ENCODE measurements at regions of chr3 and their contacts with region 1.

Region 1: GRCh38 chr3:10758304-10759061 is 57.5 kb upstream of the SLC6A11 start:
- DNase-seq: peak; percentile 62
- H3K4me3 ChIP-seq: no peak overlapping the region
- H3K27ac ChIP-seq: peak overlapping the region; percentile 87
- H3K4me1 ChIP-seq: peaks cover 23% of the 10 kb centered on the region
- H3K27me3 ChIP-seq: no peaks in the 10 kb centered on the region
- CTCF ChIP-seq: peak; percentile 75 to 77

Region 2: GRCh38 chr3:10738688-10739372 is 19.7 kb before region 1 on chr3:
- CTCF ChIA-PET with region 1: no interaction called
- dilution Hi-C with region 1: no loop called
- in situ Hi-C with region 1: no loop called
- intact Hi-C with region 1: no loop called
- DNase-seq: peak; percentile 51
- H3K4me3 ChIP-seq: no peak overlapping the region
- H3K27ac ChIP-seq: no peak overlapping the region
- H3K4me1 ChIP-seq: no peaks in the 10 kb centered on the region
- H3K27me3 ChIP-seq: peaks cover 6% of the 10 kb centered on the region
- CTCF ChIP-seq: peak; percentile 91 to 94

Region 3: DNA sequence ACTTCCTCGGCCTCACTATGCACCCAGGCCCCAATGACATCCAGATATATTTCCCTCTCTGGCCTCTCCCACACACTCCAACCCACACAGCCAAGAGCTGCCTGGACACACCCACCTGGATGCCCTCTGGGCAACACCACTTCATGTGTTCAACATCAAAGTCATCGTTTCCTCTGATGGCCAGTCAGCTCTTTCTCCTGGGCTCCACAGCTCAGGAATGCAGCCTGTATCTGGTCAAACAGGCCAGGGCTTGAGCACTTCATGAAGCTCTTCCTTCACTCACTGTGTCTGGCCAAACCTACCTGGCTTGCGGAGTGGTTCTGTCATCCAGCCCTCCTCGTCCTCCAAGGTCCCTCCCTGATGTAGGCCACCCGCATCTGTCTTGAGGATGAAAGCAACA is 21.7 kb after region 1 on chr3:
- CTCF ChIA-PET with region 1: no interaction called
- dilution Hi-C with region 1: no loop called
- in situ Hi-C with region 1: no loop called
- intact Hi-C with region 1: loop called (anchors 2 kb)
- DNase-seq: peak; percentile 82
- H3K4me3 ChIP-seq: no peak overlapping the region
- H3K27ac ChIP-seq: no peak overlapping the region
- H3K4me1 ChIP-seq: peaks cover 24% of the 10 kb centered on the region
- H3K27me3 ChIP-seq: no peaks in the 10 kb centered on the region
- CTCF ChIP-seq: no peak

Region 4: GRCh38 chr3:10945683-10946287 is 187.3 kb after region 1 on chr3:
- CTCF ChIA-PET with region 1: interaction called, 6 read pairs
- dilution Hi-C with region 1: no loop called
- in situ Hi-C with region 1: no loop called
- intact Hi-C with region 1: loop called (anchors 2 kb)
- DNase-seq: peak; percentile 33
- H3K4me3 ChIP-seq: no peak overlapping the region
- H3K27ac ChIP-seq: no peak overlapping the region
- H3K4me1 ChIP-seq: peaks cover 16% of the 10 kb centered on the region
- H3K27me3 ChIP-seq: no peaks in the 10 kb centered on the region
- CTCF ChIP-seq: peak; percentile 66 to 85

Region 5: GRCh38 chr3:11037241-11037873 is 278.9 kb after region 1 on chr3:
- CTCF ChIA-PET with region 1: no interaction called
- dilution Hi-C with region 1: loop called (anchors 25 kb)
- in situ Hi-C with region 1: no loop called
- intact Hi-C with region 1: no loop called
- DNase-seq: no peak
- H3K4me3 ChIP-seq: no peak overlapping the region
- H3K27ac ChIP-seq: no peak overlapping the region
- H3K4me1 ChIP-seq: no peaks in the 10 kb centered on the region
- H3K27me3 ChIP-seq: peaks cover 10% of the 10 kb centered on the region
- CTCF ChIP-seq: no peak

Region 6: DNA sequence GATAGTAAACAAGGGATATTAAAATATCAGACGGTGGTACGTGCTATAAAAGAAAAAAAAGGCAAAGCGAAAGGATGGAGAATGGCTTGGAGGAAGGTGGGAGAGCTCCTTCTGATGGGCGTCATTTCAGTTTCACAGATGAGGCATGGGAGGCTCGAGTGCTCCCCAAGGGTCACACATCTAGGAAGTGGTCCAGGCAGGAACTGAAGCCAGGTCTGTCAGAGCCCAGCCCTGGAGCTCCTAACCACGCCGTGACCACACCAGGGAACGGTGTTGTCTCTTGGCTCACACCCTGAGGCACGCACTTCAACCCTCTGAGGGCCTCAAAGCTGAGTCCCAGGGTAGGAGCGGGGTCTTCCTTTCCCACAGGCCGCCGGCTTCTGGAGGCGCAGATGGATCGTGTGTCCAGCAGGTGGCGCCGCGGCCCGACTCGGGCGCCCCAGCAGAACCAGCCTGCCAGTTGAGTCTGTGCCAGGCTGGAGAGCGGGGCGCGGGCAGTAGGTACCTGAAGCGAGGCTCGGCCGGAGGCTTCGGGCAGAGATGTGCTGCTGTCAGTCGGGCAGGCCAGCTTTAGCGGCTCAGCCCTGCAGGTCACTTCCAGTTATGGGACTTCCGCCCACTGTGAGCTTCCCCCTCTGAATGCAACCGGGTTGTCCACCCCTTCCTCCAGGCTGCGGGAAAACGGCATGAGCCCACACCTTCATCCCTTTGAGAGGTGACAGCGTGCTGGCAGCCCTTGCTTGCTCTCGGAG is 302.2 kb after region 1 on chr3:
- CTCF ChIA-PET with region 1: no interaction called
- dilution Hi-C with region 1: no loop called
- in situ Hi-C with region 1: loop called in 1 of 2 experiments (anchors 5 kb)
- intact Hi-C with region 1: loop called (anchors 1 kb)
- DNase-seq: peak; percentile 56
- H3K4me3 ChIP-seq: peak overlapping the region in 2 of 3 experiments; percentile 12 to 25
- H3K27ac ChIP-seq: no peak overlapping the region
- H3K4me1 ChIP-seq: peaks cover 5% of the 10 kb centered on the region
- H3K27me3 ChIP-seq: no peaks in the 10 kb centered on the region
- CTCF ChIP-seq: peak; percentile 60 to 92

Region 7: GRCh38 chr3:11201246-11202024 is 443.0 kb after region 1 on chr3:
- CTCF ChIA-PET with region 1: no interaction called
- dilution Hi-C with region 1: no loop called
- in situ Hi-C with region 1: loop called in 1 of 2 experiments (anchors 25 kb)
- intact Hi-C with region 1: loop called (anchors 1 kb)
- DNase-seq: peak; percentile 26
- H3K4me3 ChIP-seq: no peak overlapping the region
- H3K27ac ChIP-seq: no peak overlapping the region
- H3K4me1 ChIP-seq: peaks cover 24% of the 10 kb centered on the region
- H3K27me3 ChIP-seq: no peaks in the 10 kb centered on the region
- CTCF ChIP-seq: no peak

Region 8: DNA sequence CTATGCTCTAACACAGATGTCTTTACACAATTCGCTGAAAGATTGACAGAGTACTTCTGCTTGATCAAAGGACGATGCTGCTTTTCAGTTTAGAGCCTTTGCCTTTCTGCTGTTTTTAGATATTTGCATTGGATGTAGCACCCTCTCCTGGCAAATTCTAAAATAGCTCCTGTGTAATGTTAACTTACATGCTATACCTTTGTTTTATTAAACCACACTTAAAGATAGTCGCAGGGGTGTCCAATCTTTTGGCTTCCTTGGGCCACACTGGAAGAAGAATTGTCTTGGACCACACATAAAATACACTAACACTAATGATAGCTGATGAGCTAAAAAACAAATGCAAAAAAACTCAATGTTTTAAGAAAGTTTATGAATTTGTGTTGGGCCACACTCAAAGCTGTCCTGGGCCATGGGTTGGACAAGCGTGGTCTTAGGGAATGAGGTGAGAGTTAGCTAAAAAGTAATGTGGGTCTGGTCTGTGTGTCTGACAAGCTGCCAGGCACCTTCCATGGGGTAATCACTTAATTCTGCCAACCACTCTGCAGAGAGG is 576.6 kb after region 1 on chr3:
- CTCF ChIA-PET with region 1: no interaction called
- dilution Hi-C with region 1: no loop called
- in situ Hi-C with region 1: loop called in 1 of 2 experiments (anchors 10 kb)
- intact Hi-C with region 1: loop called (anchors 2 kb)
- DNase-seq: peak; percentile 62
- H3K4me3 ChIP-seq: no peak overlapping the region
- H3K27ac ChIP-seq: no peak overlapping the region
- H3K4me1 ChIP-seq: peaks cover 3% of the 10 kb centered on the region
- H3K27me3 ChIP-seq: no peaks in the 10 kb centered on the region
- CTCF ChIP-seq: peak; percentile 63 to 70